Right cardiac atrium (tissue), 5 donors: ENCODE measurements at regions of chr1 and their contacts with region 1.

Region 1: DNA sequence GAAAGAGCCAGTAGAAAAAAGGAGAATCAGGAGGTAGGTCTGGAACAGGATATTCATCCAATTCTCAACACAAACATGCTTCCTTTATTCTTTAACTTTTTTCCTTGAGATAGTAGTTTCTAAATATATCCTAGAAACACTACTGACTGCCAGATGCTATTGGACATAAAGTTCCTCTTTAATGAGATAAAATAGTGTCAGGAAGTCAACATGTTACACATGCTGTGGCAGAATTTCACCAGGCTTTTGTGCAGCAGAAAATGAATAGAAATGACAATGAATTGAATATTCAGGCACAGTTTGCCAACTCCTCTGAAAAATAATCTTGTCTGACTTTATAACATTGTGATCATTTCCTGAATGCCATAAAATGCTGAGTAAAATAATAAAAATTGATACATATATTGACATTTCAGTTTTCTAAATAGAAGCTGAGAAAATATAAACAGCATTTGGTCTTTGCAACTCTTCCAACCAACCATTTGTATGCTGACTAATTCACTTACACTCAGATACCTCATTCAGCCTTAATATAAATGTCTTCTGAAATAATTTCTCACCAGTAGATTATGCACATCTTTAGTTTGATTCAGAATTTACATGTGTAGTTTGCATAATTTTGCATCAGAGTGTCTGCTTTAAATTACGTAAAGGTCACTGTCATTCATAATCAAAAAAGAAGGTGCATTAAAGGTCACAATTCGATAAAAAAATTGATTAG is 486.1 kb upstream of the ADGRL2 start:
- DNase-seq: no peak
- ATAC-seq: peak; percentile 39 to 57
- H3K4me3 ChIP-seq: no peak overlapping the region
- H3K27ac ChIP-seq: no peak overlapping the region
- H3K4me1 ChIP-seq: no peaks in the 10 kb centered on the region
- H3K27me3 ChIP-seq: no peaks in the 10 kb centered on the region

Region 2: DNA sequence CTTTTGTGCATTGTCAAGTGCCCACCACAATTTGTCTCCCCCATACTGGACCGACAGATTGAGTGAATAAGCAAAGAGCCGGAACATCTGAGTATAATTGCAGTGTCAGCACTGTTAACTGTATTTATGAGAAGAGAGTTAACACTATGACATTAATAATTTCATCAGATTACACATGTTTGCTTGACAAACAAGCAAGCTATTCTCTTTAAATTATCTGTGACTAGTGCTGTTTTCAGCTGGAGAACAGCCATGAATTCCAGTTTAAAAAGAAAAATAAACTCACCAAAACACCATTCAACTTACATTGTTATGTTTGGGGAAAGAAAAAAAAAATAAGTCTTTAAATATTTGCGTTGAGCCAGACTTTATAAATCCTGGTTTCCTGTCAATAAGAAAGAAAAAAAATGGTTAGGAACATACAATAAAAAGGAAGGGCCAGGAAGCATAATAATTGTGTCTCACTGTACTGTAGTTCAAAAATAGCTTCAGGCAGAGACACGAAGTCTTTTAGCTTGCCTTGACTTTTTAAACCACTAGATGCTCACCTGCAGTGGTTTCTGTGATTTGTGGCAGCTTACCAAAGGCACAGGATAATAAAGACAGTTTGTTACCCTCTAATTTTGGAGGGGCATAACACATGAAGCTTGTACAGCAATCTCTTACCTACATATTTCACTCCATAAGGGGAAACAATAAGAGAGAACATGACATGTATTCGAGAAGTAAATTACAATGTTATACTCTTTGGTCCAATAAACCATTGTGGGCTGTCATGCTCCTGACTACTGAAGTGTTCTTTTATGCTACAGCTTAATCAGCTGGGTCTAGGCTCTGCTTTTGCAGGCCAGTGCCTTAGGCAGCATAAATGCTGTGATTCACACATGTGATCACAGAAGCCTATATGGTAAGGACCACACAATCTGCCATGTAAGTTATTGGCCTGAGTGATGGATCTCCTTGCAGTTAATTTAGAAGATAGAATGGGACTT is 184.1 kb after region 1 on chr1:
- intact Hi-C with region 1: loop called in 1 of 4 experiments (anchors 10 kb)
- DNase-seq: no peak
- ATAC-seq: no peak
- H3K4me3 ChIP-seq: no peak overlapping the region
- H3K27ac ChIP-seq: no peak overlapping the region
- H3K4me1 ChIP-seq: no peaks in the 10 kb centered on the region
- H3K27me3 ChIP-seq: no peaks in the 10 kb centered on the region